ENCODE measurements at regions of chr14 and their contacts with region 1.

Region 1: GRCh38 chr14:100067971-100068959 is 3.0 kb downstream of the EVL start:
- DNase-seq: peak; percentile 93
- H3K4me3 Mint-ChIP-seq: peak overlapping the region; percentile 86
- H3K27ac Mint-ChIP-seq: peak overlapping the region; percentile 97
- H3K4me1 Mint-ChIP-seq: peaks cover 49% of the 10 kb centered on the region
- H3K27me3 Mint-ChIP-seq: no peaks in the 10 kb centered on the region

Region 2: DNA sequence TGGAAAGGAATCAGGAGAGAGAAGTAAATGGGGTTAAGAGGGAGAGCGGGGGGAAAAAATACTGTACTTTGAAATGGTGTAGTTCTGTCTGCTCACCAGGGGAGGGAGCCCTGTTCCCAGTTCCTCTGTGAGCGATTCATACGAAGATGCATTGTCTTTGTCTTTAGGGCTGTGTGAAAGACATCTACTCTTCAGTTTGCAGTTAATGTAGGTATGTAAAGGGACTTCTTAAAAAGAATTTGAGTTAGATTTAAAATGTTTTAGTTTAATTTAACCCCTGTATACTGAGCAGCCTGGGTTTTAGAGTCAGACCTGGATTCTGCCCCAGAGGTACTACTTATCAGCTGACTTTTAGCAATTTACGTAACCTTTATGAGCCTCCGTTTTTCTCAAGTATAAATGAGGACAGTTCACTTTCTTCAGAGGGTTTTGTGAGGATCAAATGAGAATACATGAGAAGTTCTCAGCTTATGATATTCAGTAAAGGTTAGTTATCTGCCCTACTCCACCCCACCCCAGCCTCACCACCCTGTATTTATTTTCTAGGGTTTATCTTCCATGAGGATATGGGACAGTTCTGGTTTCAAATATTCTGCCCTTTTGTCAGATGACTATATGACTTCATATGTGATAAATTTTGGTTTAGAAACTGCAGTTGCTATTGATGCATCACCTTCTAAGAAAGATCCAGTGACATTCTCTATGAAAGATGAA is 85.6 kb before region 1 on chr14:
- CTCF ChIA-PET with region 1: interaction called, 14 read pairs
- POLR2A ChIA-PET with region 1: interaction called, 24 read pairs
- DNase-seq: peak; percentile 67
- H3K4me3 Mint-ChIP-seq: no peak overlapping the region
- H3K27ac Mint-ChIP-seq: no peak overlapping the region
- H3K4me1 Mint-ChIP-seq: peaks cover 14% of the 10 kb centered on the region
- H3K27me3 Mint-ChIP-seq: no peaks in the 10 kb centered on the region

Region 3: DNA sequence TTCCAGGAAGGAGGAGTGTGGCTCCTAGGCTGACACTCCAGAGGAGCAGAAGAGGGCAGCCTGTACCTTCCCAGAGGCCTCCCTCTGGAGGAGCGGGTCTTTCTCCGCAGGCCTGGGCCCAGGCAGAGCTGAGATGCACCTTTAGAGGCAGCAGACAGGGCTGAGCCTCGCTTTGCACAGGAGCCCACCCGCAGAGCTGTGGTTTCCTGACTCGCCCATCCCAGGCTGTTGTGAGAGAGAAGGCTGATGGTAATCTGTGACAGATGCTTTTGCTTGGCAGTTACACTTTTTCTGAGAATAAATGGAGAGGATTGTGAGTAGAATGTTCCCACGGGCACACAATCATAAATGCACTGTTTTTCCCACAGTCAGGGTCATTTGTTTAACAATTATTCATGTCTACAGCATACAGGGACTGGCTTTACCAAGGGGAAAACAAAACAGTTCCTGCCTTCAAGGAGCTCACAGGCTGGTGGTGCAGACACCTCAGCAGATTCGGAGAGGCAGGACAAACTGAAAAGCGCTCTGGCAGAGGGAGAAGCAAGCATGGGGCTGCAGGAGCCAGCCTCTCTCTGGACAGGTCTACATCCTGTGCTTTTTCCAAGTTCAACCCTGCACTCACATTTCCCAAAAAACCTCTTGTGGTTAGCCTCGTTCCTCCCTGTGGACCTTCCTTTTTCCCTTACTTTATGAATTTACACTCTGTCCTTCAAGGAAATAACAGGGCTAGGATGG is 10.9 kb after region 1 on chr14:
- CTCF ChIA-PET with region 1: interaction called, 169 read pairs
- POLR2A ChIA-PET with region 1: interaction called, 1,586 read pairs
- DNase-seq: peak; percentile 91
- H3K4me3 Mint-ChIP-seq: peak overlapping the region; percentile 76
- H3K27ac Mint-ChIP-seq: peak overlapping the region; percentile 90
- H3K4me1 Mint-ChIP-seq: peaks cover 98% of the 10 kb centered on the region
- H3K27me3 Mint-ChIP-seq: no peaks in the 10 kb centered on the region

Region 4: DNA sequence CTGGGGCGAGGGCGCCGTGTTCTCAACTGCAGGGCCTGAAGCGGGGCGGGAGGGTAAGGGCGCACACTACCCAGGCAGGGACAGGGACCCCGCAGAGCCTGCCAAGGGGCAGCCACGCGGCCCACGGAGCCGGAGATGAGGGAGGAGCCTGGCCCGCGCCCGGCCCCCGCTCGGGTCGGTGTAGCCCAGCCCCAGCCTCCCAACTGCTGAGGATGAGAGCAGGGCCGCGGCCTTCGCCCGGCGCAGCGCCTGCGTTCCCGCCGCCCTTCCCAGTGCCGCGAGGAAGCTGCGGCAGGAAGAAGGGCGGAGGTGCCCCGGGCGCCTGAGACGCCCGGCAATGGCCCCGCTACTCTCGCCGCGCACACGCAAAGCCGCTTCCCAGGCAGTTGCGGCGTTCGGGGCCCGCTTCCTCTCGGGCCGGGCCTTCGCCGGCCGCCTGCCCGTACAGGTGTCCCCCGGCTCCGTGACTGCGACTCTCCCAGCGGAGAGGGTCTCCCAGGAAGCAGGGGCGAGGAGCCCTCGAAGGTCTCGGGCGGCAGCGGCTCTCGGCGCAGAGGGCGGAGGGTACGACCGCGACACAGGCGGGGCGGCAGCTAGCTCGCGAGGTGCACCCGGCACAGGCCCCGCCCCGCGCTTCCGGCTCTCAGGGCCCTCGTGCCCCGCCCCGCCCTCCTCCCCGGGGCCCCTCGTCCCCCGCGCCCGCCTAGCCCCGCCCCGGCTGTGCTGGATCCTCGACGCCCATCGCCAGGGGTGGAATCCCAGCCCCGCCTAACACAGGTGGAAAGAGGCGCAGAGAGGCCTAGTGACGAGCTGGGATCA is 145.9 kb after region 1 on chr14:
- CTCF ChIA-PET with region 1: interaction called, 5 read pairs
- POLR2A ChIA-PET with region 1: interaction called, 14 read pairs
- DNase-seq: peak; percentile 93
- H3K4me3 Mint-ChIP-seq: peak overlapping the region; percentile 65
- H3K27ac Mint-ChIP-seq: peak overlapping the region; percentile 78
- H3K4me1 Mint-ChIP-seq: peaks cover 23% of the 10 kb centered on the region
- H3K27me3 Mint-ChIP-seq: no peaks in the 10 kb centered on the region

Region 5: DNA sequence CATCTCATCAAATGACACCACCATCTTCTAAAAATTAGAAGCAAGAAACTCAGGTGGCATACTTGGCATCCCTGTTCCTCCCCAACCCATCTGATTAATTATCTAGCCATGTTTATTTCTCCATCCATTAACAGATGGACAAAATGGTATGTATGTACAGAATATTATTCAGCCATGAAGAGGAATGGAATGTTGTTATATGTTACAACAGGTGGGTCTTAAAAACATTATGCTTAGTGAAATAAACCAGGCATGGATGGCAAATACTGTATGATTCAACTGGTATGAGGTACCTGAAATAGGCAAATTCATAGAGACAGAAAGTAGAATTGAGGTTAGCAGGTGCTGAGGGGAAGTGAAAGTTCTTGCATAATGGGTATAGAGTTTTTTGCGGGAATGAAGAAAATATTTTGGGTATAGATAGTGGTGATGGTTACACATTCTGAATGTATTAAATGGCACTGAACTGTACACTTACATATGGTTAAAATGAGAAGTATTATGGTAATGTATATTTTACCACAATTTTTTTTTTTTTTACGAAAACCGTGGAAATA is 188.2 kb after region 1 on chr14:
- CTCF ChIA-PET with region 1: no interaction called
- POLR2A ChIA-PET with region 1: no interaction called
- DNase-seq: no peak
- H3K4me3 Mint-ChIP-seq: no peak overlapping the region
- H3K27ac Mint-ChIP-seq: no peak overlapping the region
- H3K4me1 Mint-ChIP-seq: peaks cover 73% of the 10 kb centered on the region
- H3K27me3 Mint-ChIP-seq: no peaks in the 10 kb centered on the region

Region 6: GRCh38 chr14:100375963-100376735 is 307.9 kb after region 1 on chr14:
- CTCF ChIA-PET with region 1: no interaction called
- POLR2A ChIA-PET with region 1: interaction called, 15 read pairs
- DNase-seq: peak; percentile 95
- H3K4me3 Mint-ChIP-seq: peak within 1 kb of the TSS; percentile 96
- H3K27ac Mint-ChIP-seq: peak within 1 kb of the TSS; percentile 99
- H3K4me1 Mint-ChIP-seq: peaks cover 49% of the 10 kb centered on the region
- H3K27me3 Mint-ChIP-seq: no peaks in the 10 kb centered on the region